AG04449 (cell line): ENCODE measurements at regions of chr16 and their contacts with region 1.

Region 1: DNA sequence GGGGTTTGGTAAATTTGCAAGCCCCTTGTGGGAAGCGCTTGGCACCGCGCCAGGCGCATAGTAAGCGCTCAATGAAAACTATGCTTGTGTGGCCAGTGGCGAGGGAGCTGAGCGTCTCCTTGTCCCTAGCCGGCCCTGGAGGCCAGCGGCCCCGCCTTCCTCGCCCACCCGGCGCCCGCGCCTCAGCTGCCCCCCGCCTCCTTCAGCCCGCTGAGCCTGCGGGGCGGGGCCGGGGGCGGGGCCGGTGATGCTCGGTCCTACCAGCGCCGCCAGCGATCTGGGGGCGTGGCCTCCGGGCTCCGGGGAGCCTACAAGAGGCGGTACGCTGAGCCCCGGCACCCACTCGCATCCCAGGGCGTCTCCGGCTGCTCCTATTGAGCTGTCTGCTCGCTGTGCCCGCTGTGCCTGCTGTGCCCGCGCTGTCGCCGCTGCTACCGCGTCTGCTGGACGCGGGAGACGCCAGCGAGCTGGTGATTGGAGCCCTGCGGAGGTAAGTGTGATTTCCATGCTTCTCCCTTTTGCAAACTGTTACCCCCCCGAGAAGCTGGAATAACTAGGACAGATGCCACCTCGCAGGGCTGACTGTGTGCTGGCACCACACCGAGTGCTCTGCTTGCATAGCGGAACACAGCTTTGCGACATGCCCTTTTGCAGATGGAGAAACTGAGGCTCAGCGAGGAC is at the start of gene CRISPLD2:
- DNase-seq: no peak
- H3K4me3 ChIP-seq: peak within 1 kb of the TSS; percentile 72
- CTCF ChIP-seq: no peak

Region 2: GRCh38 chr16:84832488-84833143 is 12.8 kb after region 1 on chr16:
- CTCF ChIA-PET with region 1: no interaction called
- POLR2A ChIA-PET with region 1: interaction called, 20 read pairs
- DNase-seq: peak; percentile 79
- H3K4me3 ChIP-seq: no peak overlapping the region
- CTCF ChIP-seq: no peak

Region 3: DNA sequence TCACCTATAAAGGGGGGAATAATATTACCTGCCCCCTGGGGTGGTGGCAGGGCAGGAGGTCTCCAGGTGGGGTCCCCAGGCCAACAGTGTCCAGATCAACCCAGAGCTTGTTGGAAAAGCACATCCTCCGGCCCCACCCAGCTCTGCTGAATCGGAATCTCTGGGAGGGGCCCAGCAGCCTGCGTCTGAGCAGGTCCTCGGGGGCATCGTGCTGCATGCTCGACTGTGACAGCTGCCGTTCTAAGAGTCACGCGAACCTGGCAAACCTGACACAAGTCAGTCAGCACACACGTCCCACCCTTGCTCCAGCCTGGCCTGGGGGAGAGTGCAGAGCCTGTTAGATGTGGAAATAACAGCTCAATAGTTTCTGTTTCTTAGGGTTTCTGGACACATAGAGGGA is 72.3 kb after region 1 on chr16:
- CTCF ChIA-PET with region 1: no interaction called
- POLR2A ChIA-PET with region 1: no interaction called
- DNase-seq: no peak
- H3K4me3 ChIP-seq: no peak overlapping the region
- CTCF ChIP-seq: no peak